ENCODE measurements at regions of chr2 and their contacts with region 1.

Region 1: GRCh38 chr2:233470011-233470687 is 96.4 kb downstream of the USP40 start:
- DNase-seq: no peak
- H3K4me3 ChIP-seq: peak overlapping the region in 1 of 4 donors; percentile 36
- H3K27ac ChIP-seq: peak overlapping the region in 3 of 4 donors; percentile 39 to 75 (median 72)
- H3K4me1 ChIP-seq: peaks cover 0 to 18% (median 0%) of the 10 kb centered on the region in 3 donors
- H3K27me3 ChIP-seq: no peaks in the 10 kb centered on the region
- CTCF ChIP-seq: no peak
- POLR2A ChIP-seq: no peak

Region 2: GRCh38 chr2:233007739-233008138 is 462.4 kb before region 1 on chr2:
- intact Hi-C with region 1: no loop called
- DNase-seq: no peak
- H3K4me3 ChIP-seq: no peak overlapping the region
- H3K27ac ChIP-seq: no peak overlapping the region
- H3K4me1 ChIP-seq: no peaks in the 10 kb centered on the region
- H3K27me3 ChIP-seq: no peaks in the 10 kb centered on the region
- CTCF ChIP-seq: no peak
- POLR2A ChIP-seq: no peak

Region 3: GRCh38 chr2:233531888-233532458 is 61.8 kb after region 1 on chr2:
- intact Hi-C with region 1: no loop called
- DNase-seq: no peak
- H3K4me3 ChIP-seq: no peak overlapping the region
- H3K27ac ChIP-seq: no peak overlapping the region
- H3K4me1 ChIP-seq: no peaks in the 10 kb centered on the region
- H3K27me3 ChIP-seq: no peaks in the 10 kb centered on the region
- CTCF ChIP-seq: no peak
- POLR2A ChIP-seq: no peak

Region 4: GRCh38 chr2:233643128-233643527 is 173.0 kb after region 1 on chr2:
- intact Hi-C with region 1: loop called (anchors 10 kb)
- DNase-seq: no peak
- H3K4me3 ChIP-seq: no peak overlapping the region
- H3K27ac ChIP-seq: no peak overlapping the region
- H3K4me1 ChIP-seq: peaks cover 0 to 9% (median 3%) of the 10 kb centered on the region in 3 donors
- H3K27me3 ChIP-seq: no peaks in the 10 kb centered on the region
- CTCF ChIP-seq: peak in 4 of 6 experiments; percentile 19 to 56 (median 27)
- POLR2A ChIP-seq: no peak

Region 5: DNA sequence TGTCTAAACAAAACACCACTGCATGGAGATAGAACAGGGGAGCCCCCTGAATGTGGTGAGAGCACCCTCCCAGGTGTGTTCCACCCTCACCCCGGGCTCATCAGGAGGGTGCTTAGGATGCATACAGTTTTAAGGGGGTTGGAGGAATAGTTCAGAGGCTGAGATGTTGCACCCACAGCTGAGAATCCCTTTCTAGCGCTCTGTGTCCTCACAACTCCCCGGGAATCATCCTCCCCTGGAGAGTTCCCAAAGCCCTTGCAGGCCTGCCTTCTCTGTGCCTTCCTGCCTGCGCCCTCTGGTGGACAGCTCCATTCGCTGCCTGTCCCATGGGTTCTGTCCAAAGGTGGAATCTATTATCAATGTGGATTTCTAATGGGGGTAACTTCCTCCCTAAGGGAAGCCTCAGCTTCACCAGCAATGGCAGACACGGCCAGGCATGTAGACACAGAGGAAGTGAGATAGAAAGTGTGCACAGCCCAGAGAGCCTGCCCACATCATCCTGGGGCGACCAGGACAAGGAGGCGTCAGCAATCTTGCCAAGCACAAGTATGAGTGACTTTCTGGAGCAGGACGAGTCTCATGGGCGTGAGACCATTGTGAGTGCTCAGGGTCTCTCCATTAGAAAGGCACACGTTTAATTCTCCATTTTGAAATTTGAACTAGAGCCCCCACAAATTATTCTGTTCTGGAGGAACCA is 241.3 kb after region 1 on chr2:
- intact Hi-C with region 1: loop called (anchors 10 kb)
- DNase-seq: peak; percentile 14
- H3K4me3 ChIP-seq: no peak overlapping the region
- H3K27ac ChIP-seq: peak overlapping the region in 3 of 4 donors; percentile 10 to 60 (median 36)
- H3K4me1 ChIP-seq: peaks cover 0 to 40% (median 12%) of the 10 kb centered on the region in 3 donors
- H3K27me3 ChIP-seq: no peaks in the 10 kb centered on the region
- CTCF ChIP-seq: peak in 5 of 6 experiments; percentile 81 to 93 (median 86)
- POLR2A ChIP-seq: no peak